ENCODE measurements at regions of chr10 and their contacts with region 1.

Region 1: DNA sequence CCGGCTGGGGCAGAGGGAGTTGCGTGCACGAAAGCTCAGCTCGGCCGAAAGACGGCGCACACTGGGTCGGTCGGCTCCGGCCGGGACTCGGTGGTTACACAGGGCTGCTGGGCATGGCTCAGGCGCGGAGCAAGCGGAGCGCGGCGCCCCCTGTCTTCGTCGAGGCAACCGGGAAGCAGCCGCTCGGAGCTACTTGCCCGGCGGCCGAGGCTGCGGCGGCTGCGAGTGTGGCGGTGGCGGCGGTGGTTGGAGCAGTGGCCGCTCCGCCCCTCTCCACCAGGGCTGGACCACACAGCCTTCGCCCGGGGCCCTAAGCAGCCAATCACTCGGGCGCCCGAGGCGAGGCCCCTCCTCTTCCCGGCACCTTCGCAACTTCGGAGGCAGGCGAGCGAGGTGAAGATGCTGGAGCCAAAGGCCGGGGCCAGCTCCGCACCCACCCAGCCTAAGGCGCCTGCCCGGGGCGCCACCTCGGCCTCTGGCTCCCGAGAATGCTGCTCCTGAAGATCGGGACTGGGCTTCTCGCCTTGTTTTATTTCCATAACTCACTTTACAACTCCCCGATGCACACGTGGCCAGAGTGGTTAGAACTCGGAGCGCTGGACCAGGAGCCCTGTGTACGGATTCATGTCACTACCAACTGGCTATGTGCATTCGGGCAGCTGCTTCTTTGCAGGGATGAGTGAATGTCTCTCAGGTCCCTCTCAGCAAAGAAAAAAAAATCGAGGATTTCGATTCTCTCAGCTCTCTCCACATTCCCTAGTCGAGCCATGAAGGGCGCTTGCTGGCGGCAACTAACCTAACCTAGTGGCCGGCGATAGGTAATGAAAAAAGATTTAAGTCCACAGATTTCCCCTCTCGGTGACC is at the start of gene TLL2:
- DNase-seq: no peak
- ATAC-seq: peak; percentile 89
- H3K4me3 ChIP-seq: peak within 1 kb of the TSS; percentile 74
- H3K27ac ChIP-seq: no peak within 1 kb of the TSS
- H3K4me1 ChIP-seq: peaks cover 14% of the 10 kb centered on the region
- H3K27me3 ChIP-seq: peaks cover 3 to 6% of the 10 kb centered on the region in 2 experiments; a peak in 3 of 4 replicates
- CTCF ChIP-seq: peak; percentile 28 to 54 (median 52); a peak in 5 of 6 replicates
- EP300 ChIP-seq: no peak
- POLR2A ChIP-seq: 0 out of 2 replicates have a peak, but pooled peaks have one; percentile 38
- RAD21 ChIP-seq: 0 out of 2 replicates have a peak, but pooled peaks have one; percentile 9
- polyA plus RNA-seq, gene TLL2: 0.02 to 0.29 TPM

Region 2: GRCh38 chr10:96395931-96396877 is 117.7 kb before region 1 on chr10:
- CTCF ChIA-PET with region 1: interaction called, 99 read pairs
- POLR2A ChIA-PET with region 1: no interaction called
- RAD21 ChIA-PET with region 1: interaction called, 5 read pairs
- SMC1A ChIA-PET with region 1: interaction called, 10 read pairs
- in situ Hi-C with region 1: loop called (anchors 5 kb)
- intact Hi-C with region 1: loop called (anchors 1 kb)
- DNase-seq: no peak
- ATAC-seq: peak; percentile 97
- H3K4me3 ChIP-seq: no peak overlapping the region
- H3K27ac ChIP-seq: no peak overlapping the region
- H3K4me1 ChIP-seq: no peaks in the 10 kb centered on the region
- H3K27me3 ChIP-seq: peaks cover 3 to 4% of the 10 kb centered on the region in 2 experiments; a peak in 3 of 4 replicates
- CTCF ChIP-seq: peak; percentile 86 to 91 (median 87)
- EP300 ChIP-seq: no peak
- POLR2A ChIP-seq: no peak
- RAD21 ChIP-seq: peak; percentile 84

Region 3: DNA sequence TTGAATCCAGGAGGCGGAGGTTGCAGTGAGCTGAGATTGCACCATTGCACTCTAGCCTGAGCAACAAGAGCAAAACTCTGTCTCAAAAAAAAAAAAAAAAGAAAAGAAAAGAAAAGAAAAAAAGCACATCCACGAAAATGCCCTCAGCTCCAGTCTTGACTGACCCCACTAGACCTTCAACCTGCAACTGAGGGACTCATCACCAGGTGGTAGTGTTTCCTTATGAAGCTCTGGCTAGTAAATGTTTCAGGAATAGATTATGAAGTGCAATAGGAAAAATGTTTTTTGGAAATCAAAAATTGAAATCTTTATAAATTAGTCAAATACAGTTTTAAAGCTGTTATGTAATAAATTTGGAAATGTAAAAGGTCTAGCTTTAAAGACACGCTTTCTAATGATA is 22.6 kb before region 1 on chr10:
- CTCF ChIA-PET with region 1: interaction called, 26 read pairs
- POLR2A ChIA-PET with region 1: no interaction called
- RAD21 ChIA-PET with region 1: interaction called, 5 read pairs
- SMC1A ChIA-PET with region 1: interaction called, 7 read pairs
- in situ Hi-C with region 1: no loop called
- intact Hi-C with region 1: no loop called
- DNase-seq: no peak
- ATAC-seq: no peak
- H3K4me3 ChIP-seq: no peak overlapping the region
- H3K27ac ChIP-seq: no peak overlapping the region
- H3K4me1 ChIP-seq: no peaks in the 10 kb centered on the region
- H3K27me3 ChIP-seq: no peaks in the 10 kb centered on the region
- CTCF ChIP-seq: peak in 2 of 3 experiments; percentile 35 to 36; a peak in 3 of 6 replicates
- EP300 ChIP-seq: no peak
- POLR2A ChIP-seq: no peak
- RAD21 ChIP-seq: peak; percentile 52

Region 4: DNA sequence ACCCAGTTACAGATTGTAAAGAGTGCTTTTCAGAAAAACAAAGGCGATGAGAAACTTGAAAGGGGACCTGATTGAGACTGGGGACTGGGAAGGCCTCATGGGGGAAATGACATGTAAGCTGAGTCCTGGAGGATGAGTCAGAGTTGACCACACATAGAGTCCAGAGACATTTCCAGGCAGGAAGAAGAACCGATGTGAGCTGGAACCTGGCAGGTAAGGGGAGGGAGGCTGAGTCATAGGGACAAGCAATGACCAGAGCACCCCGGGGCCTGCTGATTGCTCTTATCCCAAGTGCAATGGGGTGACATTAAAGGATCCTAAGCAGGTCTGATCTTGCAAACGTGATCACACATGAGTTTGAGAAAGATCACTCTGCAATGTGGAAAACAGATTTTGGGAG is 11.9 kb before region 1 on chr10:
- CTCF ChIA-PET with region 1: interaction called, 26 read pairs
- POLR2A ChIA-PET with region 1: no interaction called
- RAD21 ChIA-PET with region 1: interaction called, 4 read pairs
- SMC1A ChIA-PET with region 1: interaction called, 10 read pairs
- in situ Hi-C with region 1: no loop called
- intact Hi-C with region 1: no loop called
- DNase-seq: no peak
- ATAC-seq: no peak
- H3K4me3 ChIP-seq: no peak overlapping the region
- H3K27ac ChIP-seq: no peak overlapping the region
- H3K4me1 ChIP-seq: peaks cover 4% of the 10 kb centered on the region; the same call in 1 of the 2 replicates
- H3K27me3 ChIP-seq: no peaks in the 10 kb centered on the region; a peak in 1 of 4 replicates
- CTCF ChIP-seq: no peak
- EP300 ChIP-seq: no peak
- POLR2A ChIP-seq: no peak
- RAD21 ChIP-seq: no peak

Region 5: DNA sequence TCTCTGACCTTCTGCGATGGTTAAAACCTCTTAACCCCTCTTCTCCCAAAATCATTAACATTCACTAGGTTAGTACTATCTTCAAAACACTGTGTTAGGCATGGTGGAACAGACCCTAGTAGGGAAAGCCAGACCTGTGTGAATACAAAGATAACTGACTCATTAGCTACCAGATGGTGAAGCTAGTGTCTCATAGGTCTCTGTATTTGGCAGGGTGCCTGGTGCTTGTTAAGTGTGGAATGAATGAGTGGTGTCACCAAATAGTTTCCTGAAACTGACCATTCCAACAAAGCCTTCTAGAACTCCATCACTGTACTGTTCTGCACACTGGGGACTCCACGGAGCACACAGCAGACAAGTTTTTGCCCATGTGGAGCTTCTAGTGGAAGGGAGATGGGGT is 100.6 kb after region 1 on chr10:
- CTCF ChIA-PET with region 1: no interaction called
- POLR2A ChIA-PET with region 1: no interaction called
- RAD21 ChIA-PET with region 1: no interaction called
- SMC1A ChIA-PET with region 1: no interaction called
- in situ Hi-C with region 1: no loop called
- intact Hi-C with region 1: no loop called
- DNase-seq: no peak
- ATAC-seq: no peak
- H3K4me3 ChIP-seq: no peak overlapping the region
- H3K27ac ChIP-seq: no peak overlapping the region
- H3K4me1 ChIP-seq: no peaks in the 10 kb centered on the region
- H3K27me3 ChIP-seq: no peaks in the 10 kb centered on the region
- CTCF ChIP-seq: no peak
- EP300 ChIP-seq: no peak
- POLR2A ChIP-seq: no peak
- RAD21 ChIP-seq: no peak

Measured in GM12878 (cell line).